Transverse colon (tissue), 4 donors: ENCODE measurements at regions of chr6 and their contacts with region 1.

Region 1: DNA sequence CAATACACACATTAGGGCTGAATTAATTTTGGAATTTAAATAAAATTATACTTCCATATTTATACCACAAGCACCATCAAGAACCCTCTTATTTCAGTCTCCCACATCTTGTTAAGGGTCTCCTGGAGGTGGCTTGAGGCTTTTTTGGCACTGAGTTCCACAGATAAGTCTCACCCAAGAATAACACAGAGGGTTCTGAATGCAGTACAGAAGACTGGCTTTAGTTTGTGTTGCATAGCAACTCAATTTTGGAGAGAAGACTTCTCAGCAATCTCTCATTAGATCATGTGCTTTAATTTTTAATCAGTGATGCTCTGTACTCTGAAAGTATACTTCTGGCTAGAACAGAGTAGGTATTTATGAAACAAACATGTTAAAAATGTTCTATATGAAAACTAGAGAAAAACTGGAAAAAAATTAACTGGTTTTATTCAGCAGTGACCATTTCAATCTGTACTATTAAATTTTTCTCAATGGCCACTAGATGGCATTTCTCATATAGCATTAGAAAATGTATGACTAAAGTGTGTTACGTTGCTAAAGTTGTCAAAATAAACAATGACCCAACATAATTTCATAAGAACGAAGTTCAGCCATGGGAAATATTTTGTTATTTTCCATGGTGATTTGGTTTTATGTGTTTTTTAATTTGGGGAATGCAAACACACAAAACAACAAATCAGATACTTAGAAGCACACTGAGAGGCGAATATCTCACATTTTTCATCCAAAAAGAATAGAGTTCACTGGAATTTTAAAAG is 32.7 kb upstream of the MAP7 start:
- DNase-seq: no peak
- H3K4me3 ChIP-seq: no peak overlapping the region
- H3K27ac ChIP-seq: peak overlapping the region; percentile 12 to 65 (median 43)
- H3K4me1 ChIP-seq: peaks cover 0 to 12% (median 2%) of the 10 kb centered on the region in 4 donors
- H3K27me3 ChIP-seq: no peaks in the 10 kb centered on the region
- CTCF ChIP-seq: peak; percentile 56 to 68 (median 62)
- EP300 ChIP-seq: no peak
- POLR2A ChIP-seq: no peak

Region 2: DNA sequence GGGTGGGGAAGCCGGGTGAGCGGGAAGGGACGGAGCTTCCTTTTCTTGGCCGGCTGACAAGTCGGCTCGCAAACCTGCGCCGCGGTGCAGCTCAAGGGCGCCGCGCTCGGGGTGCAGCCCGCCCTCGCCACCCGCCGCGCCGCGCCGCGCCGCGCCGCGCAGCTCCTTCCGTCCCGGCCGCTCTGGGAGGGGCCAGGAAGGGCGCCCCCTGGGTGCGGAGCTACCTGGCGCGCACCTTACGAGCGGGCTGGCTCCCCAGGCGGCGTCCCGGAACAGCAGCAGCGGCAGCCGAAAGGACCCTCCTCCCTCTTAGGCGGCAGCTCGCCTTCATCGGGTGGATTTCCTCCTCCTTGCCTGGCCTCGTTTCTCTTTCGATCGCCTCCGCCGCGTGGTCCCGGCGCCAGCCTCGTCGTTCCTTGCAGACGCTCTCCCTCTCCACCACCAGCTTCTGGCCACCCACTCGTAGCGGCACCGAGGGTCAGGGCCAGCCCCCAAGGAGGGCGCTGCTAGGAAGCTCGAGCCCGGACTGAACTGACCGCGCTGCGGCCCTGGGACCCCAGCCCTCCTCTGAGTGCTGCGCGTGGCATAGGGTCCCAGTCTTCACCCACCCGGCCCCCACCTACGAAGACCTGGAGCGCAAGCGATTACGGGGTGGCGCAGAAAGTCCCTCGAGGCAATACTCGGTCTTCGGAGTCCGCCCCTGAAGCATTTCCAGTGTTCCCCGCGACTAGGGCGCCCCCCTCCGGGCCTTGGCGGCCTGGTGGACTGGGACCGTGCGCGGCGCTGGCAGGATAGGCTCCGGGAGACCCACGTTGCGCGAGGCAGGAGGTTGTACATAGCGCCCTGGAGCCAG is 209.7 kb after region 1 on chr6 and contains the start of gene MAP3K5:
- in situ Hi-C with region 1: no loop called
- intact Hi-C with region 1: loop called (anchors 1 kb)
- DNase-seq: peak; percentile 96
- H3K4me3 ChIP-seq: peak within 1 kb of the TSS; percentile 75 to 96 (median 86)
- H3K27ac ChIP-seq: peak within 1 kb of the TSS; percentile 95 to 99 (median 97)
- H3K4me1 ChIP-seq: peaks cover 0 to 42% (median 22%) of the 10 kb centered on the region in 4 donors
- H3K27me3 ChIP-seq: no peaks in the 10 kb centered on the region
- CTCF ChIP-seq: peak; percentile 67 to 83 (median 78)
- EP300 ChIP-seq: no peak
- POLR2A ChIP-seq: peak; percentile 71
- total RNA-seq, gene MAP3K5: 16.2 to 52.7 (median 34.8) TPM